Spleen (tissue), 13 donors: ENCODE measurements at regions of chr11 and their contacts with region 1.

Region 1: GRCh38 chr11:120172054-120172911 is 34.4 kb upstream of the TRIM29 start:
- DNase-seq: no peak
- H3K4me3 ChIP-seq: no peak overlapping the region
- H3K27ac ChIP-seq: no peak overlapping the region
- H3K4me1 ChIP-seq: peaks cover 3 to 31% (median 23%) of the 10 kb centered on the region in 6 donors
- H3K27me3 ChIP-seq: peaks cover 0 to 75% (median 26%) of the 10 kb centered on the region in 7 donors
- CTCF ChIP-seq: peak; percentile 62 to 87 (median 77)
- POLR2A ChIP-seq: no peak

Region 2: GRCh38 chr11:120034881-120035630 is 137.2 kb before region 1 on chr11:
- intact Hi-C with region 1: no loop called
- DNase-seq: no peak
- H3K4me3 ChIP-seq: no peak overlapping the region
- H3K27ac ChIP-seq: no peak overlapping the region
- H3K4me1 ChIP-seq: no peaks in the 10 kb centered on the region
- H3K27me3 ChIP-seq: peaks cover 0 to 17% (median 0%) of the 10 kb centered on the region in 7 donors
- CTCF ChIP-seq: no peak
- POLR2A ChIP-seq: no peak

Region 3: GRCh38 chr11:120229451-120230424 is 57.5 kb after region 1 on chr11:
- intact Hi-C with region 1: loop called (anchors 2 kb)
- DNase-seq: no peak
- H3K4me3 ChIP-seq: no peak overlapping the region
- H3K27ac ChIP-seq: peak overlapping the region in 1 of 8 donors; percentile 9
- H3K4me1 ChIP-seq: peaks cover 10 to 41% (median 27%) of the 10 kb centered on the region in 6 donors
- H3K27me3 ChIP-seq: peaks cover 0 to 30% (median 0%) of the 10 kb centered on the region in 7 donors
- CTCF ChIP-seq: peak; percentile 26 to 69 (median 52)
- POLR2A ChIP-seq: no peak

Region 4: DNA sequence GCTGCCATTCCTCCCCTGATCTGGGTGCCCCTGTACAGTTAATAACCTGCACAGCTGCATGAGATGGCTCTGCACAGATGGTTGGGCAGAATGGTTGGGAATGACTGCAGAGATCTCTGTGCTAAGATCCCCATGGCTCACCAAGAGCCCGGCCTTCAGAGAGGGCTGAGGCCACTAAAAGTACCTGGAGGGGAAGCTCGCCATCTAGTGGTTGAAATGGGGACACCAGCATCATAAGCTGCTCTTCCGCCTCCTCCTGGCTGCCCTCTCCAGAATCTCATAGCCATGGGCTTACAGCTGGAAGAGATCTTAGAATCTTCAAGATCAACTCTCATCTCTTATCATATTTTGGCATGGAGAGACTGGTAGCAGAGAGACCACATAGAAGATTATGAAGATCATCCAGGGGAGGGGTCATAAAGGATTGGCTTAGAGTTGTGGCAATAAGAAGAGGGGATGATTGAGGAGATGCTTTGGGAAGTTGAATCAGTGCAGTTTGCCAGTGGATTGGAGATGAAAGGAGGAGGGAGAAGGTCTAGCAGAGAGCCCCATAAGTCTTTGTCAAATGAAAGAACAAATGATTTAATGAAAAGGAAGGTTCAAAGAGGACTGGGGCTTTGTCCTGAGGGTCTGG is 130.8 kb after region 1 on chr11:
- intact Hi-C with region 1: loop called (anchors 5 kb)
- DNase-seq: no peak
- H3K4me3 ChIP-seq: no peak overlapping the region
- H3K27ac ChIP-seq: no peak overlapping the region
- H3K4me1 ChIP-seq: peaks cover 0 to 3% (median 0%) of the 10 kb centered on the region in 6 donors
- H3K27me3 ChIP-seq: peaks cover 0 to 35% (median 0%) of the 10 kb centered on the region in 7 donors
- CTCF ChIP-seq: peak; percentile 63 to 94 (median 89)
- POLR2A ChIP-seq: no peak